Activated T-helper 1 cell treated with anti-CD3 and anti-CD28 coated beads, Interleukin-12 subunit alpha, Interleukin-12 subunit beta, Interleukin-2, Interleukin-4 antibody, amounts not matched to agents 30 ng/mL and 10 ng/mL and 1 ng/mL, durations not matched to agents 14 hours and 24 hours and 36 hours (primary cell): ENCODE measurements at regions of chr3 and their contacts with region 1.

Region 1: DNA sequence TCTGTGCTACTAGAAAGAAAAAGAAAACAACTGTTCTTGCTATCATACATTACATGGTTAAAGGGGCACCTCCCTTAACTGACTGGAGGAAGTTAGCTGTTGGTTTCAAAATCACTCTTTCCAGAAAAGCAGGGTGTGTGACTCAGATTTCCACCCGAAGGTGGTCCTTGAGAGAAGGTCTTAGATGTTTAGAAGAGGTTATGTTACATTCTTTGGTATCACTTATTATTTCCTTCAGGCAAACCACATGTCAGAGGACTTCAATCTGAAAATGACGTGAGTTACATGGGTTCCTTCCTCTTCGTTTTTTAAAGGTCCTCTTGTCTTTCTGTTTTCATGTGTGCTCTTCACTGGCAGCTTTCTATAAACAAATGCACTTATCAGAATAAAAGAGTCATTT is 307.9 kb upstream of the CBLB start:
- DNase-seq: peak; percentile 68
- H3K4me3 Mint-ChIP-seq: peak overlapping the region; percentile 75
- H3K27ac Mint-ChIP-seq: peak overlapping the region; percentile 92
- H3K4me1 Mint-ChIP-seq: peaks cover 70% of the 10 kb centered on the region
- H3K27me3 Mint-ChIP-seq: no peaks in the 10 kb centered on the region

Region 2: DNA sequence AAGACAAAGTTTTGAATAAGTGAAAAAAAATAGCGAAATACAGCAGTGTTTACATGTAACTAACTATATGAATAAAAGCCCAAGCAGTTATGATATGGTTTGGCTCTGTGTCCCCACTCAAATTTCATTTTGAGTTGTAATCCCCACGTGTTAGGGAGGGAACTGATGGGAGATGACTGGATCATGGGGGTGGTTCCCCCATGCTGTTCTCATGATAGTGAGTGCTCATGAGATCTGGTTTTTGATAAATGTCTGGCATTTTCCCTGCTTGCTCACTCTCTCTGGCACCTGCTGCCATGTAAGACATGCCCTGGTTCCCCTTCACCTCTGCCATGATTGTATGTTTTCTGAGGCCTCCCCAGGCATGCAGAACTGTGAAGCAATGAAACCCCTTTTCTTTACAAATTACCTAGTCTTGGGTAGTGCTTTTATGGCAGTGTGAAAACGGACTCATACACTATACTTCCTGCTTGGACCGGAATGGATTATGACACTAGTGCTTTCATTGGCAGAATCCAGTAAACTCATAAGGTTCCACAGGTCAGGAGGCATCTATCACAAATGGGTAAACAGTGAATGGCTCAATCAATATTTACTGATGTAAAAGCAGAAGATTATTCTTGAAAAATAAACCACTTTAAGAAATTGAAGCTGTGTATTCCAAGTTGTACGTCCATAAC is 500.0 kb before region 1 on chr3:
- intact Hi-C with region 1: loop called (anchors 2 kb)
- DNase-seq: no peak
- H3K4me3 Mint-ChIP-seq: peak overlapping the region; percentile 1
- H3K27ac Mint-ChIP-seq: peak overlapping the region; percentile 85
- H3K4me1 Mint-ChIP-seq: peaks cover 36% of the 10 kb centered on the region
- H3K27me3 Mint-ChIP-seq: no peaks in the 10 kb centered on the region

Region 3: GRCh38 chr3:105876780-105877327 is 299.9 kb before region 1 on chr3:
- intact Hi-C with region 1: loop called (anchors 1 kb)
- DNase-seq: no peak
- H3K4me3 Mint-ChIP-seq: peak overlapping the region; percentile 64
- H3K27ac Mint-ChIP-seq: peak overlapping the region; percentile 80
- H3K4me1 Mint-ChIP-seq: peaks cover 35% of the 10 kb centered on the region
- H3K27me3 Mint-ChIP-seq: no peaks in the 10 kb centered on the region

Region 4: DNA sequence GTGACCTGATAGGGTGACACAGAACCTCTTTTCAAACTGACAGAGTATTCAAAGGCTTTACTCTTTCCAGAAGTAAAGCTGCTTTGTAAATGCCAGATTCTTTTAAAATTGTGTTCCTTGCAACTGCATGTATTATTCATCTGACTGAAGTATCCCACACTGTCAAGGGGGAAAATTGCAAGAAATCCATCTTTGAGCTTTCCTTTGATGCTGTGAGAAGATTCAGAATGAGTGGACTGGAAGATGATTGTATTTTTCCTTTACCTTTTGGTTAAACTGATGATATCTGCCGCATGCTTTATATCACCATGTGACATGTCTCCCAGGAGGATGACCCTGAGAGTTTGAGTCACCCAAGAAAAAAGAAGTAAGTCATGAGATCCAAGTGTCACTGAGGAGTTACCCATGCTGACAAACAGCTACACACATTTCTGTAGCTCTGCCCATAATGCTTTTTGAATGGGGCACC is 57.1 kb before region 1 on chr3:
- intact Hi-C with region 1: loop called (anchors 1 kb)
- DNase-seq: no peak
- H3K4me3 Mint-ChIP-seq: peak overlapping the region; percentile 20
- H3K27ac Mint-ChIP-seq: peak overlapping the region; percentile 90
- H3K4me1 Mint-ChIP-seq: peaks cover 37% of the 10 kb centered on the region
- H3K27me3 Mint-ChIP-seq: no peaks in the 10 kb centered on the region

Region 5: DNA sequence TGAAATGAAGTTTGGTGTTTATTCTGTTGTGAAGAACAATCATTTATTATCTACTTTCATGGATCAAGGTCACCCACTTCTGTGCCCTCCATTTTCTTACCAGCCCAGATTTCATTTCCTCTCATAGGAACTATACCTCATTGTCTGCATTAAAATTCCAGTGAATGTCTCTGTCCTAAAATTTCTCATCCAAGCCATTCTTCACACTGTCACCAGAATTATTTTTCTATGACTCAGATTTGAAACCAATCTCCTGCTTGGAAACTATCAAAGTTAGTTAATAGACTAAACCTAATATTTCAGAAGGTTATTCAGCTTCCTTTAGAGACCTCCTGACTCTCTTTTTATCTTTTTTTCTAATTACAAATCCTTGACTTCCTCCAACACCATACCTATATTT is 56.2 kb after region 1 on chr3:
- intact Hi-C with region 1: loop called (anchors 1 kb)
- DNase-seq: no peak
- H3K4me3 Mint-ChIP-seq: no peak overlapping the region
- H3K27ac Mint-ChIP-seq: peak overlapping the region; percentile 46
- H3K4me1 Mint-ChIP-seq: peaks cover 46% of the 10 kb centered on the region
- H3K27me3 Mint-ChIP-seq: no peaks in the 10 kb centered on the region

Region 6: GRCh38 chr3:106423321-106424225 is 246.8 kb after region 1 on chr3:
- intact Hi-C with region 1: loop called (anchors 1 kb)
- DNase-seq: no peak
- H3K4me3 Mint-ChIP-seq: peak overlapping the region; percentile 45
- H3K27ac Mint-ChIP-seq: peak overlapping the region; percentile 90
- H3K4me1 Mint-ChIP-seq: peaks cover 50% of the 10 kb centered on the region
- H3K27me3 Mint-ChIP-seq: no peaks in the 10 kb centered on the region

Region 7: DNA sequence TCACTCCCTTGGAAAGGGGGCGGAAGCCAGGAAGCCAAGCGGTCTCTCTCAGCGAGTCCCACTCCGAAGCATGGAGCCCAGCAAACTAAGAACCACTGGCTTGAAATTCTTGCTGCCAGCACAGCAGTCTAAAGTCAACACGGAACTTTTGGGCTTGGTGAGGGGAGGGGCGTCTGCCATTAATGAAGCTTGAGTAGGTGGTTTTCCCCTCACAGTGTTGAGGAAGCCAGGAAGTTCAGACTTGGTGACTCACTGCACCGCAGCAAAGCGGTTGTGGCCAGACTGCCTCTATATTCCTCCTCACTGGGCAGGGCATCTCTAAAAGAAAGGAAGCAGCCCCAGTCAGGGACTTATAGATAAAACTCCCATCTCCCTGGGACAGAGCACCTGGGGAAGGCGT is 357.5 kb after region 1 on chr3:
- intact Hi-C with region 1: loop called (anchors 2 kb)
- DNase-seq: peak; percentile 40
- H3K4me3 Mint-ChIP-seq: no peak overlapping the region
- H3K27ac Mint-ChIP-seq: peak overlapping the region; percentile 72
- H3K4me1 Mint-ChIP-seq: peaks cover 28% of the 10 kb centered on the region
- H3K27me3 Mint-ChIP-seq: no peaks in the 10 kb centered on the region